Dendritic cell treated with granulocyte-macrophage colony-stimulating factor and Interleukin-4, amounts not matched to agents 40 ng/mL and 50 ng/mL, for 4 days (primary cell): ENCODE measurements at regions of chr9 and their contacts with region 1.

Region 1: DNA sequence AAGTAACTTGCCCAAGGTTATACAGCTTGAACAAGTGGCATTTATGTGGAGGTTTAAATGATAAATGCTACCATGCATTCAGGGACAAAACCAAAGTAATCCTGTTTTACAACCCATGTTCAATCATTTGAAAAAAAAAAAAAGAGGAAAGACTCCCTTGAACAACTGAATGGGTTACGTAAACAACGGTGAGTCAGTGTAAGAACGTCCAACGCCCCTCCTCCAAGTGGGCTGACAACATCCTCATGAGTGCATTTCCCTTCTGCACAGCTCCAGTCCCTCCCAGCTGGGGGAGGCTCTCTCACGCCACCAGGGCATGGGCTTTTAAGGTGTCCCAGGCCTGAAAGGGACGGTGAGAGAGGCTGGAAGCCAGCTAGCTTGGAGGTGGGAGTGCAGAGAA is 90.0 kb downstream of the PRRT1B start:
- H3K4me3 Mint-ChIP-seq: peak overlapping the region; percentile 42
- H3K27ac Mint-ChIP-seq: peak overlapping the region; percentile 82
- H3K4me1 Mint-ChIP-seq: peaks cover 87% of the 10 kb centered on the region
- H3K27me3 Mint-ChIP-seq: no peaks in the 10 kb centered on the region

Region 2: GRCh38 chr9:131598121-131598520 is 37.2 kb before region 1 on chr9:
- intact Hi-C with region 1: loop called (anchors 5 kb)
- H3K4me3 Mint-ChIP-seq: peak overlapping the region; percentile 27
- H3K27ac Mint-ChIP-seq: peak overlapping the region; percentile 83
- H3K4me1 Mint-ChIP-seq: peaks cover 94% of the 10 kb centered on the region
- H3K27me3 Mint-ChIP-seq: no peaks in the 10 kb centered on the region

Region 3: GRCh38 chr9:131697097-131697496 is 61.8 kb after region 1 on chr9:
- intact Hi-C with region 1: no loop called
- H3K4me3 Mint-ChIP-seq: no peak overlapping the region
- H3K27ac Mint-ChIP-seq: peak overlapping the region; percentile 84
- H3K4me1 Mint-ChIP-seq: peaks cover 95% of the 10 kb centered on the region
- H3K27me3 Mint-ChIP-seq: no peaks in the 10 kb centered on the region